Prostate gland (tissue), 2 donors: ENCODE measurements at regions of chr18 and their contacts with region 1.

Region 1: DNA sequence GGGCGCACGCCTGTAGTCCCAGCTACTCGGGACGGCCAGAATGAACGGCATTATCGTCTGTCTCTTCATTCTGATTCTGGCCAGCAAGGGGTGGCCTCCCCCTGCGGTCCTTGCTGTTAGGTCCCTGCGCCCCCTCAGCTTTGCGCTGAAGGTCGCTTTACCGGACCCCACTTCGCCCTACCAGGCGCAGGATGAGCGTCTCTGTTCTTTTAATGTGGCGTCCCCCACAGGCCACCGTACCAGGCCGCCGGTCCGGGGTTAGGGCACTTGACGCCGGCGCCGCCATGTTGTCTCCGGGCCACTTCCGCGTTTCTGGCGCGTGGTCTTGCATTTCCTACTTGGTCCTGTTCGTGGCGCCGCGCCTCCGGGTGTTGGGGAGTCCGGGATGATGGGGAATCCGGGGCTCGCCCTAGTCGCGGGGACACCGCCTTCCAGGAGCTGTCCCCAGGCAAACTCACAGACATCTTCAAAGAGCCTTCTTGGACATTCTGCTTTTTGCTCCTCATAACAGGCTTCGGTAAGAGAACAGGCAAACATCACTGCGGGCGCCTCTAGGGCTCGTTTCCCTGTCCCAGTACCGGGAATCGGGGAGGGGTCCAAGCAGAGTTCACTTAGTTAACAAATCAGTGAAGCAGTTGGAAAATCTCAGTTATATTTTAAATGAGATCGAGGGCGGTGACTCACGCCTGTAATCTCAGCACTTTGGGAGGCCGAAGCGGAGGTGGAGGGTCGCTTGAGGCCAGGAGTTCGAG is 8.5 kb upstream of the NARS1 start:
- DNase-seq: peak; percentile 98
- H3K4me3 ChIP-seq: peak overlapping the region; percentile 42 to 47
- H3K27ac ChIP-seq: peak overlapping the region; percentile 72 to 75
- H3K4me1 ChIP-seq: no peaks in the 10 kb centered on the region
- H3K27me3 ChIP-seq: no peaks in the 10 kb centered on the region
- CTCF ChIP-seq: peak; percentile 47 to 94 (median 80)
- POLR2A ChIP-seq: no peak

Region 2: GRCh38 chr18:57803103-57803969 is 173.2 kb after region 1 on chr18 and contains the start of gene ATP8B1:
- intact Hi-C with region 1: loop called (anchors 10 kb)
- DNase-seq: peak; percentile 98
- H3K4me3 ChIP-seq: peak within 1 kb of the TSS; percentile 64 to 91
- H3K27ac ChIP-seq: peak within 1 kb of the TSS; percentile 91 to 97
- H3K4me1 ChIP-seq: peaks cover 5% of the 10 kb centered on the region
- H3K27me3 ChIP-seq: no peaks in the 10 kb centered on the region
- CTCF ChIP-seq: peak in 2 of 4 experiments; percentile 30 to 40
- POLR2A ChIP-seq: peak; percentile 67
- total RNA-seq, gene ATP8B1: 33.5 to 103 TPM

Region 3: GRCh38 chr18:57943723-57944122 is 313.5 kb after region 1 on chr18:
- intact Hi-C with region 1: no loop called
- DNase-seq: no peak
- H3K4me3 ChIP-seq: no peak overlapping the region
- H3K27ac ChIP-seq: no peak overlapping the region
- H3K4me1 ChIP-seq: no peaks in the 10 kb centered on the region
- H3K27me3 ChIP-seq: no peaks in the 10 kb centered on the region
- CTCF ChIP-seq: no peak
- POLR2A ChIP-seq: no peak